Vagina (tissue), 2 donors: ENCODE measurements at regions of chr17 and their contacts with region 1.

Region 1: GRCh38 chr17:20992987-20993862 is 49.6 kb downstream of the USP22 start:
- DNase-seq: no peak
- H3K4me3 ChIP-seq: peak overlapping the region in 1 of 2 donors; percentile 31
- H3K27ac ChIP-seq: no peak overlapping the region
- H3K4me1 ChIP-seq: peaks cover 13% of the 10 kb centered on the region
- H3K27me3 ChIP-seq: no peaks in the 10 kb centered on the region
- CTCF ChIP-seq: peak; percentile 84 to 90 (median 89)
- POLR2A ChIP-seq: no peak

Region 2: DNA sequence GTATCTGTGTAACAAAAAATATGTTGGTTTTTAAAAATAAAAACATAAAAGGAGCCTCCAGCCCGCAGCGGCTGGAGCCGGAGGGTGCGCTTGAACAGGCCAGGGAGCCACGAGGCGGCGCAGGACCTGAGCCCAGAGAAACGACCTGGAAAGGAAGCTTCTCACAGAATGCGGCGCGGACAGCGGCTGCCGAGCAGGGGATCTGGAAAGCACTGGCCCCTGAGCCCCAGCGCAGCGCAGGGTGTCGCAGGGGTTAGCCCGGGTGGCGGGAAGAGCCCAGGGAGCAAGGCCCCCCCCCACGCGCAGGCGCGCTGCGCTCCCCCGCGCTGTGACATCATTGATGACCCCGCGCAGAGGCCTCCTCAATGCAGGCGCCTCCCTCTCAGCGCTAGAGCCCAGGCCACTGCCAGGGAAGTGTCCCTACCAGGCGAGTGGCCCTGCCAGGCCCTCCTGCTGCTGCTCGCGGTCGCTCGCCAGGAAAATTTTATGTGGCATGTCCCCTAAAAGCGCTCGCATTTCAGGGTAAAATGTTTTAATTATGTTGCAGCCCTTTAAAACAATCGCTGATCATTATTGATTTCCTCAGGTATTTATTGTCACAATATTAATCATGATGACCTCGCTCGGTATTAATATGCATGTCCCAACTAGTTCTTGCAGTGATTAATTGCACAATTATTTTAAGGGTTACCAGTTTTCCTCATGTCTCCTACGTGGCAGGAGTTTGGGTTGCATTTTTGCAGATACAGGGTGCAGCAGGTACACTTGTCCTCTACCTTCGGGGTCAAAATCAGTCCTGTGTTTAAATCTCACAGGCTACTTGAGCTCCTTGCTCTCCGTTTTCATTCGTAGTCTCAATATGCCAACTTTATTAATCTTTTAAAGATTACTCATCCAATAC is 84.6 kb before region 1 on chr17:
- intact Hi-C with region 1: loop called (anchors 10 kb)
- DNase-seq: peak in 1 of 2 donors; percentile 88
- H3K4me3 ChIP-seq: peak overlapping the region; percentile 44 to 49
- H3K27ac ChIP-seq: peak overlapping the region; percentile 85
- H3K4me1 ChIP-seq: peaks cover 14% of the 10 kb centered on the region
- H3K27me3 ChIP-seq: no peaks in the 10 kb centered on the region
- CTCF ChIP-seq: peak in 2 of 3 experiments; percentile 44 to 72
- POLR2A ChIP-seq: peak in 1 of 2 donors; percentile 13